Motor neuron (in vitro differentiated cells): ENCODE measurements at regions of chr7 and their contacts with region 1.

Region 1: DNA sequence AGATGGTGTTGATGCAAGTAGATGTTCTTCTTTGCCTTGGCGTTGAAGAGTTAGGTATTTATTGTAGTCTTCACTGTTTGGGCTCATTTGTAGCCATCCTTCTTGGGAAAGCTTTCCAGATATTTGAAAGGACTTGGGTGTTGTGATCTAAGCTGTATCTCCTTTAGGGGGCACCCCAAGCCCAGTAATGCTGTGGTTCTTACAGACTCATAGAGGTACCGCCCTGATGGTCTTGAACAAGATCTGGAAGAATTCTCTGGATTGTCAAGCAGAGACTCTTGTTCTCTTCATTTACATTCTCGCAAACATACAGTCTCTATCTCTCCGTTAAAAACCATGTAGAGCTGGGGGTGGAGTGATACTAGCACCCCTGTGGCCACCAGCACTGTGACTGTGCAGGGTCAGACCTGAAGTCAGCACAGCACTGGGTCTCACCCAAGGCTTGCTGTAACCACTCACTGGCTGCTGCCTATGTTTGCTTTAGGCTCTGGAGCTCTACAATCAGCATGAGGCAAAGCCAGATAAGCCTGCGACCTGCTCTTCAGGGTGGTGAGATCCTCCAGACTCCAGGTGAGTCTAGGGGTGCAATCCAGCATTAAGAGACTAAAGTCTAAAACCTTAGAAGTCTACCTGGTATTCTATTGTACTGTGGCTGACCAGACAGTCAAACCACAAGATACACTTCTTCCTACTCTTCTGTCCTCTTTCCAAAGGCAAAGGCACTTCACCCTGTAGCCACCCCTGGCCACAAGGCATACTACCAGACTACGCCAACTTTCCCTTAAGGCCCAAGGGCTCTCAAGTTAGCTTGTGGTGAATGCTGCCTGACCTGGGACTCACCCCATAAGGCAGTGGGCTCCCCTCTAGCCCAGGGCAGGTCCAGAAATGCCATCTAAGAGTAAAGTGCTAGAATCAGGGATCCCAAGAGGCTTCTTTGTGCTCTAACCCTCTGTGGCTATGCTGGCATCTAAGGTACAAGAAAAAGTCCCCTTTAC is 209.7 kb upstream of the TMEM196 start:
- ATAC-seq: peak in 3 of 8 experiments; percentile 88 to 96 (median 95)
- H3K4me3 ChIP-seq: no peak overlapping the region
- H3K27ac ChIP-seq: no peak overlapping the region
- H3K4me1 ChIP-seq: no peaks in the 10 kb centered on the region

Region 2: DNA sequence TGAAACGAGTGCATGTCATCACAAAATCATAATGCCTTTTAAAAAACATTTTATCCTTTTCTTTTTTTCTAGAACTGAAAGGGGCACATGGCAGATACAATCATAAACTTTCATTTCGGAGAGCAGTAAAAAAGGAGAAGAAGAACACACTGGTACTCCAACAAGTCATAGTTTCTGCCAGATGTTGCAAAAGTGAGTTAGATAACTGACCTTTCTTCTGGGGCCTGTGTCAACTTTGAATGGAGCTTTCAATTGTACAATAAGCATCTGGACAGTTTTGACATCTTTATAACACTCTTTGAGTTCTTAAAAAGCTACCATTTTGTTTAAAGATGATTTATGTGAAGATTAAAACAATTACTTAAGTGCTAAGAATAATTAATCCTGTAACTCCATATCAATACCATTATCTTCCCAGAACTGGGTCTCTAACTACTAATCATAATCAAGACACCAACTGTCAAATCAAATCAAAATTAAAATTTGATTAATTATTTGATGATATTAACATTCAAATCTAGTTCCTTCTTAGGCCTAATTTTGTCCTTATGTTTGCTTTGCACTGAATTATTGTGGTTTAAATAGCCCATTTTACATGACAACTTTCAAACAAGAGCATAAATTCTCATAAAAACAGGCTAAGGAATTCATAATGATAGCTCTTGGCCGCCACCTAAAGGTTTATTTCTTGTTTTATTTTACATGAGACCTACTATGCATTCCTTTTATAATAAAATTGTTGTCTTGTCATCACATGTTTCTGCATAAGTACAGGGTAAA is 328.0 kb after region 1 on chr7:
- in situ Hi-C with region 1: loop called in 3 of 9 experiments (anchors 25 kb)
- ATAC-seq: peak in 2 of 8 experiments; percentile 20 to 39
- H3K4me3 ChIP-seq: no peak overlapping the region
- H3K27ac ChIP-seq: no peak overlapping the region
- H3K4me1 ChIP-seq: peaks cover 9 to 16% of the 10 kb centered on the region in 2 donors